ENCODE measurements at regions of chr6 and their contacts with region 1.

Region 1: DNA sequence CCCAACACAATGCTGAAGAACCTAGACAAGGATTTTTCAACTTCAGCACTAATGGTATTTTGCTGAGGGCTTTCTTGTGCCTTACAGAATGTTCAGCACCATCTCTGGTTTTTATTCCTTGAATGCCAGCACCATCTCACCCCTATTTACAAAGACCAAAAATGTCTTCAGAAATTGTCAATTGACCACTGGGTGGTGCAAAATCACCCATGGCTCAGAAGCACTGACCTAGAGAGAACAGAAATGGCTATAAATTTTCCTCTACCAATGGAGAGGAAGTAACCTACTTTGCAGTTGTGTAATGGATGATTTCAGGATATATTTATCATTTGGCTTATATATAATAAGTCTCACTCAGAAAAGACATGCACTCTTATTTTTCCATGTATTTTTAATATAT is 431.0 kb upstream of the IRAK1BP1 start:
- DNase-seq: peak in 1 of 2 experiments; percentile 38
- H3K4me3 ChIP-seq: no peak overlapping the region
- H3K4me3 Mint-ChIP-seq: no peak overlapping the region
- H3K27ac Mint-ChIP-seq: no peak overlapping the region
- H3K4me1 ChIP-seq: no peaks in the 10 kb centered on the region
- H3K4me1 Mint-ChIP-seq: no peaks in the 10 kb centered on the region
- H3K27me3 ChIP-seq: no peaks in the 10 kb centered on the region
- H3K27me3 Mint-ChIP-seq: peaks cover 4% of the 10 kb centered on the region
- CTCF ChIP-seq: peak in 1 of 2 experiments; percentile 36

Region 2: DNA sequence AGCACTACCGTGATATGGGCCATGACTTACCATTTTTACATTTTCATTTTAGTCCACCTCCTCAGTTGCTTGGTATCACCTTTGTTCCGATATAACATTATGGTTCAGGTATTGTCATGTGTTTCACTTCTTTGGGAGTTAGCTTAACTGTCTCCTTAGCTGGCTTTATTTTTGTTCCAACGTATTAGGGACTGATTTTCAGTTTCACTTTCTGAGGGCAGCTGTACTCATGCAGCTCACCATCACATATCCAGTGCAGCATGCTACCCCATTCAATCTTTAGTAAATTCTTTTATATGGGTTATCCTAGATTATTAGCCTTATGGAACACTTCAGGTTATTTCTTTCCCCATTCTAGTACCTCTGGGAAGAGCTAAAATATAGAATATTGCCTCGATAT is 68.8 kb after region 1 on chr6:
- CTCF ChIA-PET with region 1: no interaction called
- POLR2A ChIA-PET with region 1: no interaction called
- intact Hi-C with region 1: no loop called
- DNase-seq: no peak
- H3K4me3 ChIP-seq: no peak overlapping the region
- H3K4me3 Mint-ChIP-seq: no peak overlapping the region
- H3K27ac Mint-ChIP-seq: no peak overlapping the region
- H3K4me1 ChIP-seq: no peaks in the 10 kb centered on the region
- H3K4me1 Mint-ChIP-seq: no peaks in the 10 kb centered on the region
- H3K27me3 ChIP-seq: no peaks in the 10 kb centered on the region
- H3K27me3 Mint-ChIP-seq: no peaks in the 10 kb centered on the region
- CTCF ChIP-seq: no peak

Region 3: DNA sequence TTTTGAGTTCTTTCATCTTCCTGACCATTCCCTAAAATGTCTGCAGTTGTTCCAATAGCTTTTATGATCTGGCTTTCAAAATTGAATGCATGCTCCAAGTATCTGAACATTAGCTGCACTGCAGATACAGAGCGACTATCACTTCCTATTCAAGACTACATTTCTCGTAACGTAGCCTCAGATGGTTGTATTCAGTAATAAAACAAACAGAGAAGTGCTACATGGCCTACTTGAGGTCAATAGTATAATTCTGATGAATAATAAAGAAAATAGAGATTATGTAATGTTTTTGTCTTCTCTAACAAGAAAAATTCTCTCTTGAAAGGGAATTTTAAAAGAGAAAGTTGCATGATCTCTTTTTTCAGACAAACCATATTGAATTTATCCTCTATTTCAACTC is 97.1 kb after region 1 on chr6:
- CTCF ChIA-PET with region 1: no interaction called
- POLR2A ChIA-PET with region 1: no interaction called
- intact Hi-C with region 1: loop called (anchors 5 kb)
- DNase-seq: no peak
- H3K4me3 ChIP-seq: no peak overlapping the region
- H3K4me3 Mint-ChIP-seq: no peak overlapping the region
- H3K27ac Mint-ChIP-seq: no peak overlapping the region
- H3K4me1 ChIP-seq: no peaks in the 10 kb centered on the region
- H3K4me1 Mint-ChIP-seq: no peaks in the 10 kb centered on the region
- H3K27me3 ChIP-seq: no peaks in the 10 kb centered on the region
- H3K27me3 Mint-ChIP-seq: no peaks in the 10 kb centered on the region
- CTCF ChIP-seq: no peak

Region 4: DNA sequence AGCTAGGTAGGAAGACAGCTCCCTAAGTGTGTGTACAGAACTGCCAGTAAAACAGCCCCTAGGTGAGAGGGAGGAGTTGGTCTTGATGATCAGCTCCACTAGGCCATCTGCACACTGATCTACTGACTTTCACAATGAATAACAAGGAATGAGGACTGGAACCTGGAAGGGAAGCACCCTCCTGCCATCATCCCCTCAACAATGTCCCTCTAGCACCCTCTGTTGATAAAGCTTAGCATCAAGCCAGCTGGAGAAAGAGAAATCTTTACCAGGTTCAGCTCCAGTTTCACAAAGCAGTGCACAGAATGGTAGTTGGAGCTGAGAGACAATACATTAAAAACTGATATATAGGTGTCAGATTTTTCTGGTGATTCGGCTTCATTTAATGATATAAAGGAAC is 373.8 kb after region 1 on chr6:
- CTCF ChIA-PET with region 1: interaction called, 8 read pairs
- POLR2A ChIA-PET with region 1: no interaction called
- intact Hi-C with region 1: loop called (anchors 1 kb)
- DNase-seq: peak; percentile 50 to 59
- H3K4me3 ChIP-seq: no peak overlapping the region
- H3K4me3 Mint-ChIP-seq: no peak overlapping the region
- H3K27ac Mint-ChIP-seq: no peak overlapping the region
- H3K4me1 ChIP-seq: no peaks in the 10 kb centered on the region
- H3K4me1 Mint-ChIP-seq: no peaks in the 10 kb centered on the region
- H3K27me3 ChIP-seq: no peaks in the 10 kb centered on the region
- H3K27me3 Mint-ChIP-seq: peaks cover 5% of the 10 kb centered on the region
- CTCF ChIP-seq: peak; percentile 23 to 64